GM12878 (cell line): ENCODE measurements at regions of chr7 and their contacts with region 1.

Region 1: GRCh38 chr7:105319578-105319977 is 69.1 kb downstream of the SRPK2 start:
- DNase-seq: peak; percentile 31
- ATAC-seq: peak; percentile 91
- H3K4me3 ChIP-seq: peak overlapping the region; percentile 42; the same call in 1 of the 2 replicates
- H3K27ac ChIP-seq: peak overlapping the region; percentile 54
- H3K4me1 ChIP-seq: no peaks in the 10 kb centered on the region; the same call in 1 of the 2 replicates
- H3K27me3 ChIP-seq: no peaks in the 10 kb centered on the region
- CTCF ChIP-seq: no peak
- EP300 ChIP-seq: no peak
- POLR2A ChIP-seq: peak; percentile 44; the same call in 1 of the 2 replicates
- RAD21 ChIP-seq: no peak

Region 2: DNA sequence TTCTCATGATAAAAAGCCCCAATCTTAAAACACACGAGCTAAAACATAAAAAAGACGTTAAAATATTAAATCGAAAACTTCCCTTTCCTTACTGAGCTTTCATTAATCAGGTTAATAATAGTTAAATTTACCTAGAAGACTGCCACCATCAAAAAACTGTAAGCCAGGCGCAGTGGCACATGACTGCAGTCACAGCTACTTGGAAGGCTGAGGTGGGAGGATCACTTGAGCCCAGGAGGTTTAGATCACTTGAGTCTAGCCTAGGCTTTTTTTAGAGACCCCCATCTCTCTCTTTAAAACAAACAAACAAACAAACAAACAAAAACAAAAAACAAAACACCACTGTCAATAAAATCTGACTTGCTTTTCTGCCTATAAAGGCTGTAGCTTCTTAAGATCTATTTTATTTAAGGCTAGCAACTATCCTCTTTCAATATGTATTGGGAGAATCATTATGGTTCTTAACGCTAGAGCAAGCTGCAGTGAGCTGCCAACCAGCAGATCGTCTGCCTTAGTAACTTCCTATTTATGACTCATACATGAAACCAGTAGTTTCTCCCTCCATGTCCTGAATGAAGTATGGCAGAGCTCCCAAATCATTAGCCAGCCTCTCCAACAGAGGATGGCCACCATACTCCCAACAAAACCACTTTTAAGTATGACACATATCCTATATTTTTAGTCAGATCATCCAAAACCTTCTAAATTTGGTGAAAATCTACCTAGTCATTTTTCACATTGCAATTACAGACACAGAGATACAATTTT is 94.5 kb before region 1 on chr7:
- CTCF ChIA-PET with region 1: no interaction called
- POLR2A ChIA-PET with region 1: no interaction called
- RAD21 ChIA-PET with region 1: interaction called, 5 read pairs
- SMC1A ChIA-PET with region 1: interaction called, 11 read pairs
- in situ Hi-C with region 1: no loop called
- intact Hi-C with region 1: no loop called
- DNase-seq: peak; percentile 42
- ATAC-seq: peak; percentile 97
- H3K4me3 ChIP-seq: peak overlapping the region; percentile 11; the same call in 1 of the 2 replicates
- H3K27ac ChIP-seq: 0 out of 2 replicates have a peak overlapping the region, but pooled peaks have one; percentile 5
- H3K4me1 ChIP-seq: peaks cover 5% of the 10 kb centered on the region
- H3K27me3 ChIP-seq: no peaks in the 10 kb centered on the region
- CTCF ChIP-seq: no peak
- EP300 ChIP-seq: no peak; a peak in 1 of 4 replicates
- POLR2A ChIP-seq: no peak
- RAD21 ChIP-seq: no peak

Region 3: GRCh38 chr7:105298439-105298907 is 21.1 kb before region 1 on chr7:
- CTCF ChIA-PET with region 1: interaction called, 4 read pairs
- POLR2A ChIA-PET with region 1: interaction called, 5 read pairs
- RAD21 ChIA-PET with region 1: interaction called, 9 read pairs
- SMC1A ChIA-PET with region 1: interaction called, 12 read pairs
- in situ Hi-C with region 1: no loop called
- intact Hi-C with region 1: no loop called
- DNase-seq: no peak
- ATAC-seq: peak; percentile 97
- H3K4me3 ChIP-seq: no peak overlapping the region
- H3K27ac ChIP-seq: peak overlapping the region; percentile 66
- H3K4me1 ChIP-seq: peaks cover 15% of the 10 kb centered on the region
- H3K27me3 ChIP-seq: no peaks in the 10 kb centered on the region
- CTCF ChIP-seq: no peak
- EP300 ChIP-seq: no peak
- POLR2A ChIP-seq: no peak
- RAD21 ChIP-seq: no peak

Region 4: DNA sequence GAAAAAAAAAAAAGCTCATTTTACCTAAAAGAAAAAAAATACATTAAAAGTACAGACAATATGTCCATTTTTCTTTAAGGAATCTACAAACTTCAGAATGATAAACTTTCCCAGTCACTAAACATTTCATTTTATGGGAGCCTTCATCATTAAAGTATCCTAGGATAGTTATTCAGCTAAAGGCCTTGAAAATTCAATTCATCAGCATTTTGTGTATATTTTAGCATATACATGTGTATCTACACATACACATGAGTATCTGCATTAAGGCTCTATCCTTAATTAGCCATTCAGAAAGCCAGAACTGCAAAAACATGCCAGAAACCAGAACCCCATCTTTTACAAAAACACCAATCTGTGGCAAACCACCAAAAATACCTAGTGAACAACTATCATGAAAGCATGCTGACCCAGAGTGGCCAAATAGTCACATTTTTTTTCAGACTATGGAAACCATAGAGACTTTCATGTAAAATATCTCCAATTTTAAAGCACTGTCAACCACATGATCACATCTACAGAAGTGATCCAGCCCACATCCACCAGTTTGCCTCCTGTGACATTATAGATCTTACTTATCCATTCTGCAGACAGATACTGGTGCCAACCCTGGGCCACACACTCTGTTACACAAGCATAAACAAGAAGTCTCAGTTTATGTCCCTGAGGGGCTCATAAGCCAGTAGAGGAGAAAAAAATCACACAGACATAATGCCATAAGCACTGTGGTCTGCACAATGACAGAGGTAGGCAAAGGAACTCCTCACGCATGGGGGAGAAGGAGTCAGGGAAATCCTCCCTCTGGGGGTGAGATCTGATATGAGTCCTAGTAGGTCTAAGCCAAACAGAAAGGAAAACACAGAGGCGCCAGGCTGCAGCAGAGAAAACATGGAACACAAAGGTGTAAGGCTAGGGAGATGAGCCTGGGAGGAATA is 10.1 kb before region 1 on chr7:
- CTCF ChIA-PET with region 1: interaction called, 13 read pairs
- POLR2A ChIA-PET with region 1: interaction called, 22 read pairs
- RAD21 ChIA-PET with region 1: interaction called, 5 read pairs
- SMC1A ChIA-PET with region 1: interaction called, 10 read pairs
- in situ Hi-C with region 1: no loop called
- intact Hi-C with region 1: no loop called
- DNase-seq: no peak
- ATAC-seq: peak; percentile 75
- H3K4me3 ChIP-seq: no peak overlapping the region
- H3K27ac ChIP-seq: no peak overlapping the region
- H3K4me1 ChIP-seq: peaks cover 28% of the 10 kb centered on the region
- H3K27me3 ChIP-seq: no peaks in the 10 kb centered on the region
- CTCF ChIP-seq: no peak; a peak in 1 of 6 replicates
- EP300 ChIP-seq: no peak
- POLR2A ChIP-seq: no peak
- RAD21 ChIP-seq: no peak

Region 5: DNA sequence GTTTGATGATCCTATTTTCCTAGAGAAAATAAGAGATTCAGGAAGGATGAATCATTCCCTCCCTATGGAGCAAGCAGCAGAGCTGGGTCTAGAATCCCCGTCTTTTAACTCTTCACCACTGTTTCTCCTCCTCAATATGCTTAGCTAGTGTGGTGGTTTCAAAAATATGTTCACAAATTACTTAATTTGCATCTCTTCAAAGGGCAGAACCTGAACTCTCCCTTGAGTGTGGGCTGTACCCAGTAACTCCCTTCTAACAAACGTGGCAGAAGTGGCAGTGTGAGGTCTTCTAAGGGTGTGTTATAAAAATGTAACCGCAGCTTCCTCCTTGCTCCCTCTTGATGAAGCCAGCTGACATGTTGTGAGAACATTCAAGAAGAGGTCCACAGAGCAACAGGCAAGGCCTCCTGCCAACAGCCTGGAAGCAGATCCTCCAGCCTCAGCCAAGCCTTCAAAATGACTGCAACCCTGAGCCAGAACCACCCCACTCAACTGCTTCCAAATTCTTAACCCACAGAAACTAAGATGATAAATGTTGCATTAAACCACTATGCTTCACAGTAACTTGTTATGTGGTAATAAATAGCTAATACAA is 32.5 kb after region 1 on chr7:
- CTCF ChIA-PET with region 1: interaction called, 6 read pairs
- POLR2A ChIA-PET with region 1: interaction called, 11 read pairs
- RAD21 ChIA-PET with region 1: interaction called, 3 read pairs
- SMC1A ChIA-PET with region 1: interaction called, 16 read pairs
- in situ Hi-C with region 1: no loop called
- intact Hi-C with region 1: no loop called
- DNase-seq: peak; percentile 93
- ATAC-seq: peak; percentile 91
- H3K4me3 ChIP-seq: no peak overlapping the region
- H3K27ac ChIP-seq: peak overlapping the region; percentile 62
- H3K4me1 ChIP-seq: peaks cover 43% of the 10 kb centered on the region
- H3K27me3 ChIP-seq: no peaks in the 10 kb centered on the region
- CTCF ChIP-seq: no peak
- EP300 ChIP-seq: peak; percentile 22 to 61; a peak in 2 of 4 replicates
- POLR2A ChIP-seq: peak; percentile 40; the same call in 1 of the 2 replicates
- RAD21 ChIP-seq: no peak

Region 6: DNA sequence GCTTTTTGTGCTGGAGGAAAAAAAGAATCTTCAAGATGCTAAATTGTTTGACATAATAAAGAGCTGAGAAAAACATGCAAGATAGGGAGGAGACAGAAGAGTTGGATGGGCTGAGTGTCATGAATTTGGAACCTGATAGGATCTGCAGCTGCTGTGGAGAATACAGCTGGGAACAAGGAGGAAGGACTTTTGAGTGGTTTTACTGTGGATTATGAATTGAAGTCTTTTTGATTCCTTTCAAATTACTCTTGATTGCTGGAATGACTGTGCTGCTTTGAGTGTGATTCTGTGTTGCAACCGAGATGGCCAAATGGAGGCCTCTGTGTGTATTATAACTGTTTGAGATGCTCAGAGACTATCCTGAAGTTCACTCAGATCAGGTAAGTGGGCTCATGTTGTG is 257.7 kb after region 1 on chr7:
- CTCF ChIA-PET with region 1: no interaction called
- POLR2A ChIA-PET with region 1: no interaction called
- RAD21 ChIA-PET with region 1: no interaction called
- SMC1A ChIA-PET with region 1: no interaction called
- in situ Hi-C with region 1: no loop called
- intact Hi-C with region 1: no loop called
- DNase-seq: no peak
- ATAC-seq: no peak
- H3K4me3 ChIP-seq: no peak overlapping the region
- H3K27ac ChIP-seq: no peak overlapping the region
- H3K4me1 ChIP-seq: no peaks in the 10 kb centered on the region
- H3K27me3 ChIP-seq: no peaks in the 10 kb centered on the region
- CTCF ChIP-seq: no peak
- EP300 ChIP-seq: no peak
- POLR2A ChIP-seq: no peak
- RAD21 ChIP-seq: no peak